PC-9 (cell line): ENCODE measurements at regions of chr13 and their contacts with region 1.

Region 1: GRCh38 chr13:47932950-47933923 is 67.8 kb downstream of the SUCLA2 start:
- DNase-seq: no peak
- H3K4me3 ChIP-seq: no peak overlapping the region
- H3K27ac ChIP-seq: no peak overlapping the region
- H3K4me1 ChIP-seq: no peaks in the 10 kb centered on the region
- H3K27me3 ChIP-seq: no peaks in the 10 kb centered on the region
- CTCF ChIP-seq: no peak

Region 2: DNA sequence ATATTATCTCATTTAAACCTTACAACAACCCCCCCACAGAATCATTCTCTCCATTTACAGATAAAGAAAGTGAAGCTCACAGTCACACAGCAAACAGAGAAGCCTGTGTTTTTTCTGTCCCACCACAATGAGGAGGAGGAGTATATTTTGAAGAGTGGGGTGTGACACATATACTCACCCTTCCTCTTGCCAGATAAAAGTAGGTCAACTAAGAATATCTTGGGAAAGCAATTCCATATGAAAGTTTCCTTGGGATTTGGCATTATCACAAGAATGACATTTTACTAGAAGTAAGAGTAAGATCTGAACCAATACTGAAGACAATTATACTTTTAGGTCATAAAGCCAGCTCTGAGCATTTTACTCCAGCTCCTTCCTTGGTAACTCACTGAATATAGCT is 748.9 kb before region 1 on chr13:
- CTCF ChIA-PET with region 1: no interaction called
- POLR2A ChIA-PET with region 1: no interaction called
- intact Hi-C with region 1: no loop called
- DNase-seq: no peak
- H3K4me3 ChIP-seq: no peak overlapping the region
- H3K27ac ChIP-seq: no peak overlapping the region
- H3K4me1 ChIP-seq: no peaks in the 10 kb centered on the region
- H3K27me3 ChIP-seq: no peaks in the 10 kb centered on the region
- CTCF ChIP-seq: no peak

Region 3: DNA sequence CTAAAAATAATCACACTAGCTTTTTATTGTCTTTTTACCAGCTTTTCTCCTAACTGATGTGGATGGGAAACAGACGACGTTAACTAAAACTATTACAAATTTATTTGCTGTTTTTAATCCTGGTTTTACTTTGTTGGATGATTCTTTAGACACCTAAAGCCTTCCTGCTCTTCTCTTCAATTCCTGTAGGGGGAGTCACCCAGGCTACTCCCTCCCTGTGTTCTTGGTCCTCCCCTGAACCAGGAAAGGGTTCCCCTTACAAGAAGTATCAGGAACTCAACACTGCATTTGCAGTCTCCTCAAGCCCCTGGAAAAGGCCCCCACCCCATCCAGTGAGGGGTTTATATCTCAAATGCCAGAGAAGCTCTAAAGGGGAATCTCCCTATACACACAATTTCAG is 138.3 kb before region 1 on chr13:
- CTCF ChIA-PET with region 1: no interaction called
- POLR2A ChIA-PET with region 1: no interaction called
- intact Hi-C with region 1: loop called (anchors 10 kb)
- DNase-seq: no peak
- H3K4me3 ChIP-seq: no peak overlapping the region
- H3K27ac ChIP-seq: no peak overlapping the region
- H3K4me1 ChIP-seq: no peaks in the 10 kb centered on the region
- H3K27me3 ChIP-seq: no peaks in the 10 kb centered on the region
- CTCF ChIP-seq: peak; percentile 64